MCF 10A (cell line): ENCODE measurements at regions of chr19 and their contacts with region 1.

Region 1: DNA sequence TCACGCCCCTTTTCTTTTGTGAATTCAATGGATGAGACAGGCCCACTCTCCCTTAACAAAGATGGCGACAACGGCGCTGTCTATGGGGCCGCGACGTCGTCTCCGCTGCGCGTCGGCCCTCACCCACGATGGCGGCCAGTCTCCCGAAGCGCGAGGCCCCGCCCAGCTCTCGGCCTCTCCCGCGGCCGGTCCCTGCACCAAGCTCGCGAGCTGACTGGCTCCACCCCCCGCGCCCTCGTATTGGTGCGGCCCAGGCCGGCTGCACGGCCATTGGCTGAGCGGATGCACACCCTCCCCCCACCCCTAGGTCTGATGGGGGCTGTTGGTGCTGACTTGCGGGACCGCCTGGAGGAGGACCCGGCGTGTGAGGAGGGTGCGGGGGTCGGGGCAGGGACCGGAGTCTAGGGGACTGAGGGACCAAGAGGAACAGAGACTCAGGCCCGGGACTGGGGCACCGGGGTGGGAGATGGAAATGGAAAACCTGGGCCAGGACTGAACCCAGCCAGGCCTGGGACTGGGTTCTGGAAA is 4.8 kb downstream of the SPHK2 start:
- DNase-seq: peak; percentile 95
- H3K4me3 Mint-ChIP-seq: peak overlapping the region; percentile 71
- H3K27ac Mint-ChIP-seq: peak overlapping the region; percentile 78
- H3K4me1 Mint-ChIP-seq: peaks cover 34% of the 10 kb centered on the region
- H3K27me3 Mint-ChIP-seq: no peaks in the 10 kb centered on the region
- CTCF ChIP-seq: no peak

Region 2: GRCh38 chr19:48575931-48576622 is 48.1 kb before region 1 on chr19:
- CTCF ChIA-PET with region 1: no interaction called
- POLR2A ChIA-PET with region 1: no interaction called
- intact Hi-C with region 1: no loop called
- DNase-seq: no peak
- H3K4me3 Mint-ChIP-seq: no peak overlapping the region
- H3K27ac Mint-ChIP-seq: no peak overlapping the region
- H3K4me1 Mint-ChIP-seq: peaks cover 6% of the 10 kb centered on the region
- H3K27me3 Mint-ChIP-seq: no peaks in the 10 kb centered on the region
- CTCF ChIP-seq: no peak

Region 3: GRCh38 chr19:48602117-48602739 is 21.9 kb before region 1 on chr19:
- CTCF ChIA-PET with region 1: no interaction called
- POLR2A ChIA-PET with region 1: no interaction called
- intact Hi-C with region 1: no loop called
- DNase-seq: no peak
- H3K4me3 Mint-ChIP-seq: no peak overlapping the region
- H3K27ac Mint-ChIP-seq: no peak overlapping the region
- H3K4me1 Mint-ChIP-seq: no peaks in the 10 kb centered on the region
- H3K27me3 Mint-ChIP-seq: peaks cover 15% of the 10 kb centered on the region
- CTCF ChIP-seq: no peak

Region 4: GRCh38 chr19:48637170-48637947 is 13.2 kb after region 1 on chr19 and contains the start of gene DBP:
- CTCF ChIA-PET with region 1: interaction called, 10 read pairs
- POLR2A ChIA-PET with region 1: interaction called, 108 read pairs
- intact Hi-C with region 1: loop called (anchors 2 kb)
- DNase-seq: peak; percentile 99
- H3K4me3 Mint-ChIP-seq: peak within 1 kb of the TSS; percentile 91
- H3K27ac Mint-ChIP-seq: peak within 1 kb of the TSS; percentile 99
- H3K4me1 Mint-ChIP-seq: peaks cover 24% of the 10 kb centered on the region
- H3K27me3 Mint-ChIP-seq: no peaks in the 10 kb centered on the region
- CTCF ChIP-seq: no peak
- total RNA-seq, gene DBP: 0.25 and 0.56 TPM in 2 replicates